Naive thymus-derived CD8-positive, alpha-beta T cell (primary cell): ENCODE measurements at regions of chr11 and their contacts with region 1.

Region 1: GRCh38 chr11:66842896-66843775 is at the start of gene RCE1:
- DNase-seq: peak; percentile 86 to 95 (median 91)
- ATAC-seq: peak; percentile 79 to 86
- H3K4me3 Mint-ChIP-seq: peak within 1 kb of the TSS; percentile 90 to 95 (median 94)
- H3K27ac Mint-ChIP-seq: peak within 1 kb of the TSS; percentile 84 to 97 (median 96)
- H3K4me1 Mint-ChIP-seq: peaks cover 28 to 62% (median 45%) of the 10 kb centered on the region in 4 donors
- H3K27me3 Mint-ChIP-seq: no peaks in the 10 kb centered on the region
- polyA plus RNA-seq, gene RCE1: 18.1 to 27.1 (median 18.4) TPM

Region 2: GRCh38 chr11:66810576-66811185 is 32.5 kb before region 1 on chr11:
- POLR2A ChIA-PET with region 1: no interaction called
- DNase-seq: no peak
- ATAC-seq: no peak
- H3K4me3 Mint-ChIP-seq: no peak overlapping the region
- H3K27ac Mint-ChIP-seq: no peak overlapping the region
- H3K4me1 Mint-ChIP-seq: no peaks in the 10 kb centered on the region
- H3K27me3 Mint-ChIP-seq: no peaks in the 10 kb centered on the region

Region 3: GRCh38 chr11:66820901-66821300 is 22.2 kb before region 1 on chr11:
- POLR2A ChIA-PET with region 1: interaction called, 10 read pairs
- DNase-seq: no peak
- ATAC-seq: no peak
- H3K4me3 Mint-ChIP-seq: no peak overlapping the region
- H3K27ac Mint-ChIP-seq: no peak overlapping the region
- H3K4me1 Mint-ChIP-seq: no peaks in the 10 kb centered on the region
- H3K27me3 Mint-ChIP-seq: no peaks in the 10 kb centered on the region

Region 4: GRCh38 chr11:66855574-66856495 is 12.7 kb after region 1 on chr11:
- POLR2A ChIA-PET with region 1: interaction called, 35 read pairs
- DNase-seq: peak in 6 of 10 donors; percentile 49 to 81 (median 64)
- ATAC-seq: peak; percentile 66 to 73
- H3K4me3 Mint-ChIP-seq: peak overlapping the region; percentile 71 to 91 (median 84)
- H3K27ac Mint-ChIP-seq: peak overlapping the region in 8 of 10 donors; percentile 11 to 76 (median 56)
- H3K4me1 Mint-ChIP-seq: peaks cover 5 to 12% (median 7%) of the 10 kb centered on the region in 4 donors
- H3K27me3 Mint-ChIP-seq: no peaks in the 10 kb centered on the region